Activated CD4-positive, alpha-beta T cell treated with anti-CD3 and anti-CD28 coated beads for 36 hours (primary cell): ENCODE measurements at regions of chr9 and their contacts with region 1.

Region 1: DNA sequence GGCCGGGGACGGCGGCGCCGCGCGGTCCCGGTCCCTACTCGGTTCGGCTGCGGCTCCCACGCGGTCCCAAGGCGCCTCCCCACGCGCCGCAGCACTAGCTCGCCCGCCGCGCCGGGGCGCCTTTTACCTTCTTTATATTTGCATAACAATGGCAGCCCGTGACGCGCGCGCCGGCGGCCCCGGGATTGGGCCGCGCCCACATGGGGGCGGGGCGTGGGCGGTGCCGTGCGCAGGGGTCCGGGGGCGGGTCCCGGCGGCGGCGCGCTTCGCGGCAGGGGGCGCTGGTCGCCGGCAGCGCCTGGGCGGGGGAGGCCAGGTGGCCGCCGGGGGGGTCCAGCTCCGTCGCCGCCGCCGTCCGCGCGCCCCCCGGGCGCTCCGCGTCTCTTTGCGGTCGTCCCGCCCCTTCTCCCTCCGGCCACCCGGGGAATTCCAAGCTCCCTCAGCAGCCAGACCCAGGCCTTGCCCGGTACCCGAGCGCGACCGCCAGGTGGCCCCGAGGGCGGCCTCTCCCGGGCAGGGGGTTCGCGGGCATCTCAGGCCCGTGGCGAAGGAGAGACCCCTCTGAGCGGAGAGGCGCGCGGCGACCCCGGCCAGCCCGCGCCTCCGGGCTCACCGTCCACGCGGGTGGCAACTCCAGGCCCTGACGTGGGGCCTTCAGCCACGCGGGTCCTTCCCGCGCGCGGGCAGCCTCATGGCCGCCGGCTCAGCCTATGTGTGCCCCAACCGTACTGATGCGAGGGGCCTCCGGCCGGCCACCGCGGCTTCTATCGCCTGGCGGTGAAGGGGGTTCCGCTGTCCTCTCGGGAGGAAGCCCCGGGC is at the start of gene NRARP:
- DNase-seq: peak; percentile 96
- ATAC-seq: peak; percentile 75
- H3K4me3 Mint-ChIP-seq: peak within 1 kb of the TSS; percentile 74
- H3K27ac Mint-ChIP-seq: no peak within 1 kb of the TSS
- H3K4me1 Mint-ChIP-seq: peaks cover 15% of the 10 kb centered on the region
- H3K27me3 Mint-ChIP-seq: peaks cover 10% of the 10 kb centered on the region
- total RNA-seq, gene NRARP: 2.1 TPM

Region 2: DNA sequence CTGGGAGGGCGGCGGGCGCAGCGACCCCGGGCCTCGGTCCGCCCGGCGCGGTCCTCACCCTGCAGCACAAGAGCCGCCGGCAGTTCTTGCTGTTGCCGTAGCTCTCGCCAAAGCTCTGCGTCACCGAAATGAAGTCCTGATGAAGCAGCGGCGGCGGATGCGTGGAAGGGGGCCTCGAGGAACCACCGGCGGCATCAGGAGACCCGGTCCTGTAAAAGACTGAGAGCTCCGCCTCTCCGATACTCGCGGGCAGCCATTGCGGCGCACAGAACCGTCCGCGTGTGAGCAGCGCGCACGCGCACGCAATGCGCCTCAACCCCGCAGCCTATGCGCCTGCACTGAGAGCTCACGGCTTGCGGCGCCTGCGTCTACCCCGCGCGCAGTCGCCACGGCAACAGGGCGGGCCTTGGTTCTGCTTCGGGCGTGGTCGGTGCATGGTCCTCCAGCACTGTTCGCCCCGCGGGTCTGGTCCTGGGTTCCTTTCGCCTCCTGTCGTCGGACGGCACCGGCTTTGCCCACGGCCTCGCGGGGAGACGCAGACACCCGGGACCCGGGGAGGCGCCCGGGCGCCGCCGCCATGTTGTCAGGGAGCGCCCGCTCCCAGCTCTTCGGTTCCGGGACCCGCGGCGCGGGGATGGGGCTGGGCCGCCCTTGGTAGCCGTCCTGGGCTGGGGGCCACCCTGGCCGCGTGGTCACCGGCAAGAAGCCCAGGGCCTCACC is 172.8 kb before region 1 on chr9:
- CTCF ChIA-PET with region 1: no interaction called
- POLR2A ChIA-PET with region 1: no interaction called
- intact Hi-C with region 1: loop called in 1 of 2 experiments (anchors 2 kb)
- DNase-seq: peak; percentile 95
- ATAC-seq: peak; percentile 96
- H3K4me3 Mint-ChIP-seq: peak overlapping the region; percentile 89
- H3K27ac Mint-ChIP-seq: peak overlapping the region; percentile 70
- H3K4me1 Mint-ChIP-seq: peaks cover 21% of the 10 kb centered on the region
- H3K27me3 Mint-ChIP-seq: peaks cover 5% of the 10 kb centered on the region

Region 3: GRCh38 chr9:137326445-137327065 is 24.2 kb after region 1 on chr9:
- CTCF ChIA-PET with region 1: interaction called, 6 read pairs
- POLR2A ChIA-PET with region 1: no interaction called
- intact Hi-C with region 1: loop called in 1 of 2 experiments (anchors 2 kb)
- DNase-seq: no peak
- ATAC-seq: peak; percentile 79
- H3K4me3 Mint-ChIP-seq: peak overlapping the region; percentile 24
- H3K27ac Mint-ChIP-seq: peak overlapping the region; percentile 44
- H3K4me1 Mint-ChIP-seq: peaks cover 9% of the 10 kb centered on the region
- H3K27me3 Mint-ChIP-seq: peaks cover 10% of the 10 kb centered on the region

Region 4: DNA sequence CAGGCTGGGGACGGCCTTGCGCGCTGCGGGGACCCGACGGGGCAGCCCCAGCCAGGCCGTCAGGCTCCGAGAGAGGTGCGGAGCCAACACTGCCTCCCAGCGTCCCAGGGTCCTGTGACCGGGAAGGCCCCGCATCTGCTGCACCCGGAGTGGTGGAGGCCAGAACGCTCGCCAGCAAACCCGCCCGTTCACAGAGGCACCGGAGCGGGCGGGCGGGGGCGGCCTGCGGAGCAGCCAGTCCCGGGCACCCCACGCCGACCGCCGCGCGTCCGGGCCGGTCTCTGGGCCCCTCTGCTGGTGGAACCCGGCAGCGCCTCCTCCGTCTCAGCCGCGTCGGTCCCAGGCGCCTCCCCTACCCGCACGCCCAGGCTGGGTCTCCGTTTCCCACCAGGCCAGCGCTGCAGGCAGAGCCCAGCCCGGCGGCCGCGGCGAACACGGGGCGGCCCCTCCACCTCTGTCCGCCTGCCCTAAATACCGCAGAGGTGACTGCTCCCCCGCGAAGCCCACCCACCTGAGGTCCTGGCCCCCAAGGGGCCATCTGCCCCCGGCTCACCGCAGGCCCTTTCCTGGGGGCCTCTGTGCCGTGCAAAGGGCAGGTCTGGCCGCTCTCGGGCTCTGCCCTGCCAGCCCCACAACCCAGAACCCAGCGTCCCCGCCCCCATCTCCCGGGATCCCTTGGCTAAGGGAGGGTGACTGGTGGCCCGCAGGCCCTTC is 104.6 kb after region 1 on chr9:
- CTCF ChIA-PET with region 1: interaction called, 4 read pairs
- POLR2A ChIA-PET with region 1: no interaction called
- intact Hi-C with region 1: loop called in 1 of 2 experiments (anchors 1 kb)
- DNase-seq: peak; percentile 84
- ATAC-seq: peak; percentile 94
- H3K4me3 Mint-ChIP-seq: no peak overlapping the region
- H3K27ac Mint-ChIP-seq: no peak overlapping the region
- H3K4me1 Mint-ChIP-seq: peaks cover 2% of the 10 kb centered on the region
- H3K27me3 Mint-ChIP-seq: no peaks in the 10 kb centered on the region

Region 5: DNA sequence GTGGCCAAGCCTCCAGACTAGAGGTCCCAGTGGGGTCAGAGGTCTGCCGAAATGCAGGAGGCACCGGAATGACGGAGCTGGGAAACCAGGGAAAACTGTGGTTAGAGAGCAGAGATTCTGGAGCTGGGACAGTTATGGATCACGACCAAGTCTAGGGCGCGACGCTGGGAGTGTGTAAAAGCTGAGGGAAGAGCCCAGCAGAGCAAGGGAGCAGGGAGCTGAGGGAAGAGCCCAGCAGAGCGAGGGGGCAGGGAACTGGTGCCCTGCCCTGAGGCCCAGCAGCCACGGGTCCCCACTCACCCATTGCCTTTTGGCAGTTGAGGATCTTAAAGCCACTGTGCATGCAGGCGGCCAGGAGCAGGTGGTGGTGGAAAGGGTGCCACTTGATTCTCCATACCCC is 261.7 kb after region 1 on chr9:
- CTCF ChIA-PET with region 1: no interaction called
- POLR2A ChIA-PET with region 1: no interaction called
- intact Hi-C with region 1: no loop called
- DNase-seq: no peak
- ATAC-seq: no peak
- H3K4me3 Mint-ChIP-seq: no peak overlapping the region
- H3K27ac Mint-ChIP-seq: no peak overlapping the region
- H3K4me1 Mint-ChIP-seq: no peaks in the 10 kb centered on the region
- H3K27me3 Mint-ChIP-seq: no peaks in the 10 kb centered on the region